ENCODE measurements at regions of chr1 and their contacts with region 1.

Region 1: GRCh38 chr1:94025383-94026340 is 95.3 kb downstream of the ABCA4 start:
- DNase-seq: no peak
- ATAC-seq: peak; percentile 45

Region 2: GRCh38 chr1:93851878-93852277 is 173.8 kb before region 1 on chr1:
- intact Hi-C with region 1: no loop called
- DNase-seq: no peak
- ATAC-seq: no peak

Region 3: GRCh38 chr1:94095112-94095637 is 69.5 kb after region 1 on chr1:
- intact Hi-C with region 1: no loop called
- DNase-seq: peak; percentile 94
- ATAC-seq: peak; percentile 85

Region 4: DNA sequence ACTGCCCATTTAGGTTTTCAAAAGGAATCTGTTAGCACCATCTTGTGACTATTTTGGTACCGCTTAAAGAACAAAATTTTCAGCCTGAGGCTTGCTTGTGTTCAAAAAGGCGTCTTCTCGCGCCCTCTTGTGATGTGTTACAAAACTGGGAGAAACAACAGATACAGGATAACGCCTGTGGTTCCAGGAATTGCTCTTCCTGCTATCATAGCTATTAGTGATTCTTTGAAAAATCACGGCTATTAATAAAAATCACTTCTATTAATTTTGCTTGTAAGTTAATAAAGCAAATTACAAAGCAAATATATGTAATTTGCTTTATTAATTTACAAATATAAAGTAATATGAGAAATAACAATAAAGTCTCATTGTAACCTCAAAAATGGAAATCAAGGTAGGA is 310.3 kb after region 1 on chr1:
- intact Hi-C with region 1: loop called (anchors 5 kb)
- DNase-seq: peak; percentile 49
- ATAC-seq: peak; percentile 94